ENCODE measurements at regions of chr4 and their contacts with region 1.

Region 1: GRCh38 chr4:156169011-156169410 is 215.3 kb upstream of the CTSO start:
- DNase-seq: peak; percentile 95
- ATAC-seq: peak; percentile 97
- H3K4me3 ChIP-seq: no peak overlapping the region
- H3K27ac ChIP-seq: no peak overlapping the region
- H3K4me1 ChIP-seq: peaks cover 5% of the 10 kb centered on the region
- H3K27me3 ChIP-seq: no peaks in the 10 kb centered on the region
- CTCF ChIP-seq: peak; percentile 75
- POLR2A ChIP-seq: no peak
- RAD21 ChIP-seq: peak; percentile 84

Region 2: DNA sequence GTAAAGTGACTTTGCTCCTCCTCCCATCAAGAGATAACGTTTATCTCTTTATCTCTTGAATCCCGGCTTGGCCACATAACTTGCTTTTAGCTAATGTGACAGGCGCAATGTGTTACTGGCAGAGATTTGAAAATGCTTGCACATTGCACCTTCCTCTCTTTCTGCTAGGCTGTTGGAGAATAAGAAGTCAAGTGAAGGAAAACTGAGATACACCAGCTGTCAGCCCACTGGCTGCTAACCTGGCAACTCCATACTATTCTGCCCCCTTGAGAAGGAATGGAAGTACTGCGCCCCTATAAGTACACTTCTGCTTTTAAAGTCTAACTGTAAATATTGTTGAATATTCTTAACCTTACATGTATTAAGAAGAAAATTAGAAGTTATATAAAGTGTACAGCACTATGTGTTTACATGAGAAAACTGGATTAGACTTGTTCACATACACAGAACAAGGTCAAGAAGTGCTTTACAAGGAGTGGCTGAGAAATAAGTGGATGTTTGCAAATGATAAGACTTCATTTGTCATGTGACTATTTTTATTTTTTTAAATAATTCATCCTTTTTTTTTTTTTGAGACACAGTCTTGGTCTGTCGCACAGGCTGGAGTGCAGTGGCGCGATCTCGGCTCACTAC is 209.1 kb after region 1 on chr4:
- CTCF ChIA-PET with region 1: no interaction called
- POLR2A ChIA-PET with region 1: no interaction called
- dilution Hi-C with region 1: no loop called
- in situ Hi-C with region 1: no loop called
- intact Hi-C with region 1: loop called (anchors 1 kb)
- DNase-seq: peak; percentile 71
- ATAC-seq: peak; percentile 89
- H3K4me3 ChIP-seq: no peak overlapping the region
- H3K27ac ChIP-seq: no peak overlapping the region
- H3K4me1 ChIP-seq: peaks cover 2% of the 10 kb centered on the region
- H3K27me3 ChIP-seq: no peaks in the 10 kb centered on the region
- CTCF ChIP-seq: peak; percentile 69
- POLR2A ChIP-seq: no peak
- RAD21 ChIP-seq: peak; percentile 67

Region 3: GRCh38 chr4:156660465-156660864 is 491.5 kb after region 1 on chr4:
- CTCF ChIA-PET with region 1: no interaction called
- POLR2A ChIA-PET with region 1: no interaction called
- dilution Hi-C with region 1: no loop called
- in situ Hi-C with region 1: no loop called
- intact Hi-C with region 1: no loop called
- DNase-seq: no peak
- ATAC-seq: no peak
- H3K4me3 ChIP-seq: no peak overlapping the region
- H3K27ac ChIP-seq: no peak overlapping the region
- H3K4me1 ChIP-seq: no peaks in the 10 kb centered on the region
- H3K27me3 ChIP-seq: no peaks in the 10 kb centered on the region
- CTCF ChIP-seq: no peak
- POLR2A ChIP-seq: no peak
- RAD21 ChIP-seq: no peak

Region 4: DNA sequence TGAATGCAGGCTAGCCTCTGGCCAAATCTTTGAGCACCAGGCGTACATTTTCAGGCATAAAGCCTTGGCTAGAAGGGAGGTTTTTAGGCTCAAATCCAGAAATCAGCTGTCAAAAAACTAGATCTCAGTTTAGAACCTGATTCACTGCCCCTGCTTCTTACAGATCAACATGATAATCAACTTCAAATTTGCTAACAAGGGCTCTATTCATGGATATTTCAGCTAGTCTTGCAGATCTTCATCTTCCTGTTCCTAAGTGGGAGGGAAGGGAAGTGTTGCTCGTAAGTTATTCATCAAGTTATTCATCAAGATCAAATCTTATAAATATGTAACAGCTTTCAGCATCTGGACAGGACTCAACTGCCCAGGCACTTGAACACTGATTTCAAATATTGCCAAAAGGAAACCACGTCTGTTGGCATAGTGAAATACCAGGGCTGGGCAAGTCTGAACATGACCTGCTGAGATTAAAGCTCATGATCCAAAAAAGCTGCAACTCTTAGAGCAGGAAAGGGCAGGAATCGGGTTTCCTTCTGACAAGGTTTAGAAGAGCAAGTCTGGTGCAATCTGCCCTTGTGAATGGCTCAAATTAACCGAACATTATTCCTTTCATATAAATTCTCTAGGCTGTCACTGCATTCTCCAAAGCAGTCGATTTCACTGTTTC is 602.3 kb after region 1 on chr4:
- CTCF ChIA-PET with region 1: no interaction called
- POLR2A ChIA-PET with region 1: no interaction called
- dilution Hi-C with region 1: no loop called
- in situ Hi-C with region 1: no loop called
- intact Hi-C with region 1: loop called (anchors 10 kb)
- DNase-seq: peak; percentile 69
- ATAC-seq: peak; percentile 69
- H3K4me3 ChIP-seq: no peak overlapping the region
- H3K27ac ChIP-seq: peak overlapping the region; percentile 91
- H3K4me1 ChIP-seq: peaks cover 10% of the 10 kb centered on the region
- H3K27me3 ChIP-seq: no peaks in the 10 kb centered on the region
- CTCF ChIP-seq: no peak
- POLR2A ChIP-seq: no peak
- RAD21 ChIP-seq: no peak

Region 5: DNA sequence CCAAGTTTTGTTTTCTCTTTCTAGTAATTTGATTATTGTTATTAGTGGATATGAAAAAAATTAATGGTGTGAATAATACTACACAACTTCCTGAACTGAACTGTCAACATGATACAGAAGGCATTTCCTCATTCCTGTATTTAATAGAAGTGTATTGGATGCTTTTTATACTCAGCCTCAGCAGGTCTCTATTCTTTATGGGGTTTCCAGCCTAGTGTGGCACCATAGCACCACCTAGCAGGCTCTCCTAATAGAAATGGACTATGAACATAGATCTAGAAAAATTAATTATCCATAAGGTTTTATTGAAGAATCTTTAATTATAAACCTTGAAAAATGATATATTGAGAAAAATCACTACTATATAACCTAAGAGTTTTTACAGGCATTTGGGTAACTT is 959.4 kb after region 1 on chr4:
- CTCF ChIA-PET with region 1: no interaction called
- POLR2A ChIA-PET with region 1: no interaction called
- dilution Hi-C with region 1: no loop called
- in situ Hi-C with region 1: no loop called
- intact Hi-C with region 1: loop called (anchors 1 kb)
- DNase-seq: peak; percentile 52
- ATAC-seq: peak; percentile 88
- H3K4me3 ChIP-seq: no peak overlapping the region
- H3K27ac ChIP-seq: no peak overlapping the region
- H3K4me1 ChIP-seq: no peaks in the 10 kb centered on the region
- H3K27me3 ChIP-seq: no peaks in the 10 kb centered on the region
- CTCF ChIP-seq: peak; percentile 67
- POLR2A ChIP-seq: no peak
- RAD21 ChIP-seq: peak; percentile 74

Region 6: DNA sequence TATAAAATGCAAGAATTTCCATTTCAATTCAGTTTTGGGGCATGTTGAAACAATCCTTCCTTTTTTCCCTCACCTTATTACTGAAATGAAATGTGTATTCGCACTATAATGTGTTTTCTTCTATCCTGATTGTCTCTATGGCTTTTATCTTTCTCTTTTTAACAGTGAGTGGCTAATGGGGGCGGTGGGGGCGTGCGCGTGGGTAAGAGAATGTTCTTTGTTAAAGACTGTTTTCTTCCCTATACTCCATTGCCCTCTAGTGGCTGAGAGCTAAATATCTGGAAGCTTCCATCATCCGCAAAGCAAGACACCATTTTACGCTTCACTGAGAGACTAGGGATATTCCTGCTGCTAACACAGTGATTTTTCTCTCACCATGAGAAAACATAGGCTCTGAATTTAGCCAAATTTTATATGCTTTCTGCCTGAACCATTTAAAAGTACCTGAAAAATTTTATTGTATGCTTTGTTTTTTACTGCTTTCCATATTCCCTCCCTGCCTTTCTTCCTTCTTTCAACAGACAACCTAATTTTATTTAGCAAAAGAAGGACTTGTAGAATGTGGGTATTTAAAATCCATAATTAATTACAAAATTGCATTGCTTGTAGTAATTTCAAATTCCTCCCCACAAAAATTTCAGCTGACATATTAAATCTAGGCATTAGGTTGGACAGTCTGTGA is 1809.8 kb after region 1 on chr4:
- CTCF ChIA-PET with region 1: no interaction called
- POLR2A ChIA-PET with region 1: no interaction called
- dilution Hi-C with region 1: no loop called
- in situ Hi-C with region 1: no loop called
- intact Hi-C with region 1: loop called (anchors 1 kb)
- DNase-seq: peak; percentile 64
- ATAC-seq: peak; percentile 95
- H3K4me3 ChIP-seq: no peak overlapping the region; the same call in 1 of the 2 replicates
- H3K27ac ChIP-seq: no peak overlapping the region
- H3K4me1 ChIP-seq: no peaks in the 10 kb centered on the region
- H3K27me3 ChIP-seq: no peaks in the 10 kb centered on the region; the same call in 1 of the 2 replicates
- CTCF ChIP-seq: peak; percentile 78
- POLR2A ChIP-seq: no peak
- RAD21 ChIP-seq: peak; percentile 81

Measured in IMR-90 (cell line).